ENCODE measurements at regions of chr12 and their contacts with region 1.

Region 1: GRCh38 chr12:96219698-96220206 is 25.6 kb downstream of the ELK3 start:
- DNase-seq: peak; percentile 92
- H3K4me3 ChIP-seq: peak overlapping the region; percentile 34
- CTCF ChIP-seq: no peak

Region 2: DNA sequence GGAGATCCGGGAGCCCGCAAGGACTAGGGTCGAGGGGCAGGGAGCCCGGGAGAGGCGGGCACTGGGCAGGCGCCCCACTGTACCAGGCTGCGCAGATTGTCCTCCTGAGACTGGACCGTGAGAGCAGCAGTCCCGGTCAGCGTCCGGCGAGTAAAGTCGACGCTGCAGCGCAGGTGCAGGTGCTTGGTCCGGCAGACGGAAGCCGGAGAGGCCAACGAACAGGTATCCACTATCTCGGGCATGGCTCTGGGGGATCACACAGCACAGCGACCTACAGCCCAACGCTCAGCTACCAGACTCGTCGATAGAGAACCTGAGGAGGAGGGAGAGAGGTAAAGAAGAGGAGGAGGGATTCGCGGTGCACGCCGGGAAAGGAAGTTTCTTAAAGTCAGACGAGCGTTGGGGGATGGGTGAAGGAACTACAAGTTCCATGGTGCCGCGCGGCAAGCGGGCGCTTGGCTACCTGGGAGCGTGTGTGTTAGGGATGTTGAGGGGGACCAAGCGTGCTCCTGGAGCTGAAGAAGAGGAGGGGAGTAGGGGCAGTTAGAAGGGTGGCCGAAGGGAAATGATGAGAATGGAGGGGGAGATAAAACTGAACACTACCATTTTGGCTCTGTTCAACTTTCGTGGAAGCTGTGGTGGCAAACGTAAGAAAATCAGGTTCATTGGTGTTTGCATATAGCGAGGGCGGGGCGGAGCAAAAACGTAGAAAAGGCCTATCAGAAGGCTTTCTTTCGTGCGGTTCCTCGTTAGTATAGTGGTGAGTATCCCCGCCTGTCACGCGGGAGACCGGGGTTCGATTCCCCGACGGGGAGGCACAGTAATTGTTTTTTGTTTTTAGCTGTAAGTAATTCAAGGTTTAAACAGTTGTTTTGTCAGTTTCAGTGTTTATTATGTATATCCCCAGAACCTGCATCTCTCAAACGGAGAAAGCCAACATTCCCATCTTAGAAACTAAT is 184.2 kb before region 1 on chr12 and contains the start of gene LTA4H:
- CTCF ChIA-PET with region 1: interaction called, 12 read pairs
- POLR2A ChIA-PET with region 1: no interaction called
- DNase-seq: peak; percentile 88
- H3K4me3 ChIP-seq: peak within 1 kb of the TSS; percentile 100
- CTCF ChIP-seq: no peak

Region 3: GRCh38 chr12:96061864-96062453 is 157.8 kb before region 1 on chr12:
- CTCF ChIA-PET with region 1: interaction called, 234 read pairs
- POLR2A ChIA-PET with region 1: no interaction called
- DNase-seq: peak; percentile 50
- H3K4me3 ChIP-seq: no peak overlapping the region
- CTCF ChIP-seq: peak; percentile 74

Region 4: GRCh38 chr12:96194971-96195844 is 24.5 kb before region 1 on chr12:
- CTCF ChIA-PET with region 1: interaction called, 177 read pairs
- POLR2A ChIA-PET with region 1: interaction called, 5 read pairs
- DNase-seq: no peak
- H3K4me3 ChIP-seq: peak overlapping the region; percentile 98
- CTCF ChIP-seq: no peak

Region 5: GRCh38 chr12:96237465-96238077 is 17.8 kb after region 1 on chr12:
- CTCF ChIA-PET with region 1: interaction called, 14 read pairs
- POLR2A ChIA-PET with region 1: interaction called, 3 read pairs
- DNase-seq: peak; percentile 85
- H3K4me3 ChIP-seq: peak overlapping the region; percentile 29
- CTCF ChIP-seq: no peak

Region 6: DNA sequence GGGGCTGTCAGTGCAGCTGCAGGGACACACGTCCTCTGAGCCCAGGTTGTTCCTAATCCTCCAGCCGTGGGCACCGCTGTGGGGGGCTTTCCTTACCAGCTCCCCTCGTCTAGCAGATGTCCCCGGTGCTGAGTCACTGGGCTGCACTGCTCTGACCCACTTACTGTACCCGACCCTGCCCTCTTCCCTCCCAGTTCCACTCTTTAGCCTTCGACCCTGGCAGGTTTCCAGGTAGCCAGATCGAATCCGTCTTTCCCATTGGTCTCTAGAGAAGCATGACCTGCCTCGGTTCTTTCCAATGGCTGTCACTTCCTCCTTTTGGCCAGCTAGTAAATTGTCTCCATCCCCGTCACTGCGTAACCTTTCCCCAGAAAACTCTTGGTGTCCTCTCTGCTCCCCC is 22.8 kb after region 1 on chr12:
- CTCF ChIA-PET with region 1: interaction called, 14 read pairs
- POLR2A ChIA-PET with region 1: no interaction called
- DNase-seq: no peak
- H3K4me3 ChIP-seq: no peak overlapping the region
- CTCF ChIP-seq: no peak

Region 7: GRCh38 chr12:96383991-96384390 is 164.2 kb after region 1 on chr12:
- CTCF ChIA-PET with region 1: no interaction called
- POLR2A ChIA-PET with region 1: no interaction called
- DNase-seq: no peak
- H3K4me3 ChIP-seq: no peak overlapping the region
- CTCF ChIP-seq: no peak